ENCODE measurements at regions of chr12 and their contacts with region 1.

Region 1: GRCh38 chr12:25436203-25437030 is 116.7 kb downstream of the LMNTD1 start:
- DNase-seq: peak; percentile 18 to 64 (median 42)
- ATAC-seq: peak; percentile 82
- H3K4me3 ChIP-seq: peak overlapping the region; percentile 22; the same call in 1 of the 2 replicates
- H3K27ac ChIP-seq: no peak overlapping the region
- H3K4me1 ChIP-seq: no peaks in the 10 kb centered on the region
- H3K27me3 ChIP-seq: no peaks in the 10 kb centered on the region; a peak in 1 of 5 replicates
- CTCF ChIP-seq: peak; percentile 57 to 87 (median 76); a peak in 5 of 6 replicates
- EP300 ChIP-seq: no peak
- POLR2A ChIP-seq: no peak
- RAD21 ChIP-seq: peak; percentile 85 to 88

Region 2: DNA sequence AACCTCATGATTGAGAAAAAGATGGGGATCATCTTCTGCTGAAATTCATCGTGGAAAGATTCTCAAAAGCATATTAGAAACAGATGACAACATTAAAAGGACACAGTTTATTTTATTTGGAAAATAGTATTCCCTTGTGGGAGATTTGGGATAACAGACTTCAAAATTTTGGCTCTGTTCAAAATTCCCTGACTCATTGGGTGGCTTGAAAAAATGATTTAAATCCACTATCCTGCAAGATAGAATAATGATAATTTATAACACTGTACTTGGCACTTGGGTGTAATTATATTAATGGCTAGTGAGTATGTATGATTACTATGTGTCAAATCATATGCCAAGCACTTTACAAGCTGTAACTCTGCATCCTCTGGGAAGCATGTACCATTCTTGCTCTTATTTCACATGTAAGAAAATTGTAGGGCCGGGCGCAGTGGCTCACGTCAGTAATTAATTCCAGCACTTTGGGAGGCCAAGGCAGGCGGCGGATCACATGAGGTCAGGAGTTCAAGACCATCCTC is 12.1 kb before region 1 on chr12:
- CTCF ChIA-PET with region 1: no interaction called
- POLR2A ChIA-PET with region 1: no interaction called
- in situ Hi-C with region 1: no loop called
- intact Hi-C with region 1: no loop called
- DNase-seq: no peak
- ATAC-seq: no peak
- H3K4me3 ChIP-seq: no peak overlapping the region
- H3K27ac ChIP-seq: no peak overlapping the region
- H3K4me1 ChIP-seq: no peaks in the 10 kb centered on the region; a peak in 1 of 5 replicates
- H3K27me3 ChIP-seq: no peaks in the 10 kb centered on the region
- CTCF ChIP-seq: no peak
- EP300 ChIP-seq: no peak
- POLR2A ChIP-seq: no peak
- RAD21 ChIP-seq: no peak

Region 3: GRCh38 chr12:26028953-26029735 is 592.7 kb after region 1 on chr12:
- CTCF ChIA-PET with region 1: interaction called, 9 read pairs
- POLR2A ChIA-PET with region 1: no interaction called
- in situ Hi-C with region 1: loop called (anchors 5 kb)
- intact Hi-C with region 1: loop called (anchors 1 kb)
- DNase-seq: peak; percentile 20 to 43 (median 24)
- ATAC-seq: 0 out of 3 replicates have a peak, but pooled peaks have one; percentile 35
- H3K4me3 ChIP-seq: no peak overlapping the region
- H3K27ac ChIP-seq: no peak overlapping the region
- H3K4me1 ChIP-seq: no peaks in the 10 kb centered on the region
- H3K27me3 ChIP-seq: no peaks in the 10 kb centered on the region; a peak in 1 of 5 replicates
- CTCF ChIP-seq: peak; percentile 49 to 79 (median 67); a peak in 5 of 6 replicates
- EP300 ChIP-seq: no peak
- POLR2A ChIP-seq: no peak
- RAD21 ChIP-seq: peak; percentile 84 to 90